Heart left ventricle (tissue), 16 donors: ENCODE measurements at regions of chr1 and their contacts with region 1.

Region 1: DNA sequence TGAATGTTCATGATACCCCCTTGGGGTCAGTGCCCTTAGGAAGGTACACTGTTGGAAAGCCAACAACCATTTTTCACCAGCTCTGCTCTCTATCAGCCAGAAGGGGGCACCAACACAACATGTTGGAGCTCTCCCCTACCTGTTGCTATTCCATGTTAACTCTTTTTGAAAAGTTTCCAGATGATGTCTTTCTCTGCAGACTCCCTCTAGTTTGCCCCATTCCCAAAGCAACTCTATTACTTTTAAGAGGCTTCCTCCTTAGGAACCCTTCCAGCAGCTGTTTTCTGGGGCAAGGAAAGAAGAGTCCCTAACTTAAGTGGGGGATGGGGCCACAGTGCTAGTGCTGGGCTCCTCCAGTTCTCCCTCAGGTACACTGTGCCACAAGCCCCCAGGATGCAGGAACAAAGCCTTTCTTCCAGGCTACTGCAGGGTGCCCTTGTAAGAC is 22.9 kb upstream of the NDC1 start:
- DNase-seq: peak in 3 of 5 donors; percentile 17 to 33 (median 27)
- ATAC-seq: peak; percentile 36 to 74 (median 60)
- H3K4me3 ChIP-seq: no peak overlapping the region
- H3K27ac ChIP-seq: no peak overlapping the region
- H3K4me1 ChIP-seq: no peaks in the 10 kb centered on the region
- H3K27me3 ChIP-seq: no peaks in the 10 kb centered on the region
- CTCF ChIP-seq: peak; percentile 57 to 81 (median 72)
- POLR2A ChIP-seq: no peak

Region 2: GRCh38 chr1:53783056-53783455 is 77.9 kb before region 1 on chr1:
- intact Hi-C with region 1: no loop called
- DNase-seq: no peak
- ATAC-seq: no peak
- H3K4me3 ChIP-seq: no peak overlapping the region
- H3K27ac ChIP-seq: no peak overlapping the region
- H3K4me1 ChIP-seq: no peaks in the 10 kb centered on the region
- H3K27me3 ChIP-seq: no peaks in the 10 kb centered on the region
- CTCF ChIP-seq: no peak
- POLR2A ChIP-seq: no peak

Region 3: GRCh38 chr1:53929246-53929960 is 68.4 kb after region 1 on chr1:
- intact Hi-C with region 1: no loop called
- DNase-seq: no peak
- ATAC-seq: no peak
- H3K4me3 ChIP-seq: no peak overlapping the region
- H3K27ac ChIP-seq: no peak overlapping the region
- H3K4me1 ChIP-seq: no peaks in the 10 kb centered on the region
- H3K27me3 ChIP-seq: no peaks in the 10 kb centered on the region
- CTCF ChIP-seq: no peak
- POLR2A ChIP-seq: no peak

Region 4: DNA sequence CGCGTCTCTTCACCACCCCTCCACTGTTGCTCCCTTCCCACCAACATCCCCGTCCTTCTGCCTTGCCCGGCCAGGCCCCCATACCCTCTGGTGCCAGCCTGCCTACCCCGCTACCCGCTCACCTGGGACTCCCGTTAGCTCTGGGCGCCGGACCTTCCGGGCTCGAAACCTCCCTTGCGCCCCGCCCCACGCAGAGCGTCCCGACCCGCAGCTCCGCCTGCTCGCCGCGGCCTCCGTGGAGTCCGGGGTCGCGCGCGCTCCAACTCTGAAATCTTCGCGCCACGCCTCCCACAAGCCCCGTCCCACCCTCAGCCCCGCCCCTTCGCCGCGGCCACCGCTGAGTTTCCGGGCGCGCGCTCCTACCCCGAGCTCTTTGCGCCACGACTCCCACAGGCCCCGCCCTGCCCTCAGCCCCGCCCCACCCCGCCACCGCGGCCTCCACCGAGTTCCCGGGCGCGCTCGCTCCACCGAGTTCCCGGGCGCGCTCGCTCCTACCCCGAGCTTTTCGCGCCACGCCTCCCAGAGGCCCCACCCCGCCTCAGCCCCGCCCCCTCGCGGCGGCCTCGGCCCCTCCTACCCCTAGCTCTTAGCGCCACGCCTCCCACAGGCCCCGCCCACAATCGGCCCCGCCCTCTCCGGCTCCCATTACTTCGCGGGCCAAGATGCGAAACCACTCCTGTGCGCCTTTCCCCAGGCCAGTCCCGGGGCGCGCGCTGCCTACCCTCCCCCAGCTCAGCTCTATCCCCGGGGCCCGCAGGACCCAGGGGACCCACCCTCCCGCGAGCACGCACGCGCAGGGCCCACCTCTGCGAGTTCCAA is 84.7 kb after region 1 on chr1 and contains the start of gene IFT25:
- intact Hi-C with region 1: loop called in 3 of 10 experiments (anchors 5 kb)
- DNase-seq: peak; percentile 95 to 99 (median 96)
- ATAC-seq: peak; percentile 92 to 96 (median 94)
- H3K4me3 ChIP-seq: peak within 1 kb of the TSS; percentile 48 to 99 (median 90)
- H3K27ac ChIP-seq: peak within 1 kb of the TSS; percentile 63 to 98 (median 92)
- H3K4me1 ChIP-seq: peaks cover 2 to 42% (median 23%) of the 10 kb centered on the region in 12 donors
- H3K27me3 ChIP-seq: no peaks in the 10 kb centered on the region
- CTCF ChIP-seq: no peak
- POLR2A ChIP-seq: peak in 1 of 2 donors; percentile 88
- total RNA-seq, gene IFT25: 6.5 to 17.6 (median 12.3) TPM

Region 5: DNA sequence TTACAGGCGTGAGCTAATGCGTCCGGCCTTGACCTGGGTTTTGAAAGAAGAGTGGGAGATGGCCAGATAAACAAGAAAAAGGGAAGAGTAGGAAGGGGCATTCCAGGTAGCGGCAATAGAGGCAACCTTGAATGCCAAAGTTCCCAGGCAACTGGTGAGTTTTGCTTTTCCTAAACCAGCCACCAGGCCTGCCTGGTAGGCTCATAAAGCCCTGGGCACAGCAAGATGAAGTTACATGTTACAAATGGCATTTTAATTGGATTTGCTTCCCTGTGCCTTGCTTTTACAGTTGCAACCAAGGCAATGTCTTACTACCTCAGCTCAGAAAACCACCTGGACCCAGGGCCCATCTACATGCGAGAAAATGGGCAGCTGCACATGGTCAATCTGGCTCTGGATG is 90.7 kb after region 1 on chr1:
- intact Hi-C with region 1: loop called in 4 of 10 experiments (anchors 5 kb)
- DNase-seq: no peak
- ATAC-seq: no peak
- H3K4me3 ChIP-seq: no peak overlapping the region
- H3K27ac ChIP-seq: no peak overlapping the region
- H3K4me1 ChIP-seq: peaks cover 0 to 37% (median 15%) of the 10 kb centered on the region in 12 donors
- H3K27me3 ChIP-seq: no peaks in the 10 kb centered on the region
- CTCF ChIP-seq: no peak
- POLR2A ChIP-seq: no peak

Region 6: DNA sequence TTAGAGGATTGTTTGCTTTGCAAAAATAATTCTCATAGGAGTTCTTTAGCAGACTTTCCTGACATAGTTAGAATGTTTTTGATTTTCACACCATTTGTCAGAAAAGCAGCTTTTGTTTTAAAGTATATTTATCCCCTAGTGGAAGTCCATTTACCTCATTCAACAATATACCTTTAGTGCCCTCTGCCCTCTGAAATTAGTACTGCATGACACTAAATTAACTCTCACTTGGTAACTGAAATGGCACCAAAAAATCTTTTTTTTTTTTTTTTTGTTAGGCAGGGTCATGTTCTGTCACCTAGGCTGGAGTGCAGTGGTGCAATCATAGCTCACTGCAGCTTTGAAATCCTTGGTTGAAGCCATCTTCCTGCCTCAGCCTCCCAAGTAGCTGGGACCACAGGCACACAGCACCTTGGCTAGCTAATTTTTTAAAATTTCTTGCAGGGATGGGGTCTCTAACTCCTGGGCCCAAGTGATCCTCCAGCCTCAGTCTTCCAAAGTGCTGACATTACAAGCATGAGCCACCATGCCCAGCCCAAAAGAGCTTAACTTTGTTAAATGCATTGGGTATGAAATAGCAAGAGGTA is 98.8 kb after region 1 on chr1:
- intact Hi-C with region 1: loop called in 3 of 10 experiments (anchors 5 kb)
- DNase-seq: no peak
- ATAC-seq: no peak
- H3K4me3 ChIP-seq: no peak overlapping the region
- H3K27ac ChIP-seq: no peak overlapping the region
- H3K4me1 ChIP-seq: peaks cover 0 to 19% (median 7%) of the 10 kb centered on the region in 12 donors
- H3K27me3 ChIP-seq: no peaks in the 10 kb centered on the region
- CTCF ChIP-seq: peak; percentile 35 to 67 (median 48)
- POLR2A ChIP-seq: no peak

Region 7: GRCh38 chr1:54052934-54053744 is 192.2 kb after region 1 on chr1 and contains the starts of genes TCEANC2 and TMEM59:
- intact Hi-C with region 1: loop called in 1 of 10 experiments (anchors 10 kb)
- DNase-seq: peak; percentile 98 to 99 (median 98)
- ATAC-seq: peak; percentile 96 to 98 (median 98)
- H3K4me3 ChIP-seq: peak within 1 kb of the TSS; percentile 88 to 99 (median 95)
- H3K27ac ChIP-seq: peak within 1 kb of the TSS; percentile 88 to 98 (median 94)
- H3K4me1 ChIP-seq: peaks cover 0 to 51% (median 41%) of the 10 kb centered on the region in 12 donors
- H3K27me3 ChIP-seq: no peaks in the 10 kb centered on the region
- CTCF ChIP-seq: peak in 1 of 12 donors; percentile 7
- POLR2A ChIP-seq: peak in 1 of 2 donors; percentile 63
- total RNA-seq, gene TCEANC2: 3.0 to 6.6 (median 4.6) TPM
- total RNA-seq, gene TMEM59: 193 to 496 (median 352) TPM

Region 8: GRCh38 chr1:54158071-54158470 is 297.1 kb after region 1 on chr1:
- intact Hi-C with region 1: no loop called
- DNase-seq: no peak
- ATAC-seq: peak in 1 of 4 donors; percentile 32
- H3K4me3 ChIP-seq: no peak overlapping the region
- H3K27ac ChIP-seq: no peak overlapping the region
- H3K4me1 ChIP-seq: peaks cover 0 to 14% (median 3%) of the 10 kb centered on the region in 12 donors
- H3K27me3 ChIP-seq: no peaks in the 10 kb centered on the region
- CTCF ChIP-seq: no peak
- POLR2A ChIP-seq: no peak

Region 9: DNA sequence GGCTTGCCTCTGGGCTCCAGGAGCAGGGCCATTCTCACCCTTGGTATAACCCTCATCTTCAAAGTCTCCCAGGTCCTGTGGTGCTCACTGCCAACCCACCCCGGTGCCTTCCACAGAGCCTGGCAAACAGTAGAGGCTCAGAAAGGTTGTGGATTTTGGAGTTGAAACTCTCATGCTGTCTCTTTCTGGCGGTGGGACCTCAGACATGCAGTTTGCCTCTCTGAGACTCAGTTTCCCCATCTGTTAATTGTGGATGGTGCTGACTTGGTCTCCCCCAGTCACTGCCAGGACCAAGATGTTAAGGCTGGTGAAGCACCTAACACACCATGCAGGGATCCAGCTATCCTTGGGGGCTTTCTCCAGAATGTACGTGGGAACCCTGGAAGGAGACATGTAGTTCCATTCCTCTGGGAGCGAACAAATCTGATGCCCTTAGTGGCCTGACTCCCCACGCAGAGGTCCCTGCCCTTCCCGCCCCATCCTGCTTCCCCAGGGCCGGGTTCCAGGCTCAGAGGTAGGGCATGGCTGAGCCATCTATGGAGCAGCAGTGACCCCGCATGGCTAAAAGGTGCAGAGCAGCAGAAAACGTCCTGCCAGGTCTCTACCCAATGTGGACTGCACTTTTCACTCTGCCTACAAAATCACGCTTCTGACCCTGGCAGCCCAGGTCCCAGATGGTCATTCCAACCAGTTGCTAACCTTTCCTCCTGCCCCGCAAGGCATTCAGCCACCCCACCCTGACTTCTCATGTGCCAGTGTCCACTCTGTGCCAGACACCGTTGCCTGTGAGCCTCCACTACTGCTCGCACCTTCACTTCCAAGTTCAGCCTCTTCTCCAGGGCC is 949.3 kb after region 1 on chr1:
- intact Hi-C with region 1: loop called in 3 of 10 experiments (anchors 2 to 5 kb)
- DNase-seq: peak in 4 of 5 donors; percentile 32 to 64 (median 56)
- ATAC-seq: peak; percentile 82 to 89 (median 86)
- H3K4me3 ChIP-seq: no peak overlapping the region
- H3K27ac ChIP-seq: no peak overlapping the region
- H3K4me1 ChIP-seq: no peaks in the 10 kb centered on the region
- H3K27me3 ChIP-seq: peaks cover 0 to 6% (median 0%) of the 10 kb centered on the region in 9 donors
- CTCF ChIP-seq: peak; percentile 60 to 79 (median 75)
- POLR2A ChIP-seq: no peak